ENCODE measurements at regions of chr12 and their contacts with region 1.

Region 1: DNA sequence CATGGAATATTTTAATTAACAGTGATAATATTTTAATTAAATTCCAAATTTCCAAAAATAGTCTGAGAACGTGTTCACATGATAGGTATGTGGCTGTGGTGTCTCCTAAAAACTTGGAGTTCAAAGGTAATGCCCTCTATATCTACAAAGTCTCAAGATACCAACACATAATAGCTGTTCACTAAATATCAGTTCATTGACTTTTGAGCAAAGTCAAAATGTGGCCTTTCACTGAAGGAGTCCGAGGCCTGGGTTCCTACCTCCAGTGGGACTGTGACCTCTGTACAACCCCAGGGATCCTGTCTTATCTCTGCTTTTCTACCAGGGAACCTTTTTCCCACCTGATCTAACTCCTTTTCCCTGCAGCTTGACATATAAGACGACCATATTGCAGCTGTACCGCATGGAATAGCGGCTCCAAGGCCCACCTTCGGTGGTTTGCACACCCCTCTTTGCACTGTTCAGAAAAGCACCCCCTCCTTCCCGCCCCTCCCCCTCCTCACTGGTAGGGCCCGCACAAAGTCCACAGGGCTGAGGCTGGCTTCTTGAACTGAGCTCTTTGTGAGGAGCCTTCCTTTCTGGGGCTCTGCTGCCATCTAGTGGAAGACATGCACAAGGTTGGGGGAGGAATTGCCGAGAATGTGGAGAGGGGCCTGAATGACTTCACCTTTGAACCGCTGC is 3.1 kb downstream of the CCND2 start:
- DNase-seq: peak; percentile 85
- ATAC-seq: peak; percentile 83
- H3K4me3 ChIP-seq: no peak overlapping the region
- H3K27ac ChIP-seq: no peak overlapping the region
- H3K4me1 ChIP-seq: peaks cover 47% of the 10 kb centered on the region
- H3K27me3 ChIP-seq: peaks cover 21 to 68% of the 10 kb centered on the region in 2 experiments; a peak in 4 of 5 replicates
- CTCF ChIP-seq: peak; percentile 96
- EP300 ChIP-seq: no peak
- POLR2A ChIP-seq: no peak
- RAD21 ChIP-seq: peak; percentile 88

Region 2: GRCh38 chr12:3299929-3300832 is 976.5 kb before region 1 on chr12:
- CTCF ChIA-PET with region 1: interaction called, 3 read pairs
- POLR2A ChIA-PET with region 1: no interaction called
- in situ Hi-C with region 1: loop called (anchors 10 kb)
- intact Hi-C with region 1: no loop called
- DNase-seq: peak; percentile 72
- ATAC-seq: peak; percentile 58
- H3K4me3 ChIP-seq: peak overlapping the region in 2 of 3 experiments; percentile 6 to 51; a peak in 4 of 6 replicates
- H3K27ac ChIP-seq: no peak overlapping the region
- H3K4me1 ChIP-seq: peaks cover 29% of the 10 kb centered on the region
- H3K27me3 ChIP-seq: peaks cover 2 to 54% of the 10 kb centered on the region in 2 experiments; a peak in 4 of 5 replicates
- CTCF ChIP-seq: peak; percentile 97
- EP300 ChIP-seq: no peak
- POLR2A ChIP-seq: no peak
- RAD21 ChIP-seq: peak; percentile 80

Region 3: DNA sequence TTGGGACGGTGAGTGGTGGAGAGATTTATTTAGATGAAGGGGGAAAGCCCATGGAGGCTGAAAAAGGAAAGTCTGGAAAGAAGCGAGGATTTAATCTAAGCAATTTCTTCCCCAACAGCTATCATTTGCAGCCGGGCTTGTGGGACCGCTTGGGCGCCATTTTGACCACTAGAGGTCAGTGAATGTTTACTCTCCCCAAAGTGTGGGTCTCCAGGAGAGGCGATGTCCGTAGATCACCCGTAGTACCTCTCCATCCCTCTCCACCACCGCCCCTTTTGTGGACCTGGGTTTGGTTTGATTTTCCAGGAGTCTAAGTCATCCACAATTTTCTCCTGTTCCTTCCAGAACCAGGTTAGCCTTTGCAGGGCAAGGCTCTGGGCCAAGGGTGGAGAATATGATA is 312.2 kb before region 1 on chr12:
- CTCF ChIA-PET with region 1: interaction called, 4 read pairs
- POLR2A ChIA-PET with region 1: interaction called, 3 read pairs
- in situ Hi-C with region 1: loop called (anchors 5 kb)
- intact Hi-C with region 1: no loop called
- DNase-seq: peak; percentile 18
- ATAC-seq: peak; percentile 63
- H3K4me3 ChIP-seq: no peak overlapping the region
- H3K27ac ChIP-seq: no peak overlapping the region
- H3K4me1 ChIP-seq: peaks cover 42% of the 10 kb centered on the region
- H3K27me3 ChIP-seq: no peaks in the 10 kb centered on the region
- CTCF ChIP-seq: peak; percentile 74
- EP300 ChIP-seq: no peak
- POLR2A ChIP-seq: no peak
- RAD21 ChIP-seq: peak; percentile 65

Region 4: GRCh38 chr12:3998968-3999826 is 277.5 kb before region 1 on chr12:
- CTCF ChIA-PET with region 1: interaction called, 10 read pairs
- POLR2A ChIA-PET with region 1: no interaction called
- in situ Hi-C with region 1: loop called (anchors 5 kb)
- intact Hi-C with region 1: loop called (anchors 5 kb)
- DNase-seq: peak; percentile 88
- ATAC-seq: peak; percentile 86
- H3K4me3 ChIP-seq: no peak overlapping the region; a peak in 1 of 6 replicates
- H3K27ac ChIP-seq: peak overlapping the region; percentile 89
- H3K4me1 ChIP-seq: peaks cover 52% of the 10 kb centered on the region
- H3K27me3 ChIP-seq: no peaks in the 10 kb centered on the region
- CTCF ChIP-seq: no peak
- EP300 ChIP-seq: peak; percentile 53 to 67; a peak in 2 of 4 replicates
- POLR2A ChIP-seq: 0 out of 4 replicates have a peak, but pooled peaks of 1 of the 2 experiments have one; percentile 27
- RAD21 ChIP-seq: no peak

Region 5: GRCh38 chr12:4107436-4107878 is 169.2 kb before region 1 on chr12:
- CTCF ChIA-PET with region 1: interaction called, 5 read pairs
- POLR2A ChIA-PET with region 1: no interaction called
- in situ Hi-C with region 1: loop called (anchors 5 kb)
- intact Hi-C with region 1: loop called (anchors 1 kb)
- DNase-seq: peak; percentile 55
- ATAC-seq: peak; percentile 86
- H3K4me3 ChIP-seq: no peak overlapping the region
- H3K27ac ChIP-seq: no peak overlapping the region
- H3K4me1 ChIP-seq: no peaks in the 10 kb centered on the region
- H3K27me3 ChIP-seq: no peaks in the 10 kb centered on the region
- CTCF ChIP-seq: peak; percentile 68
- EP300 ChIP-seq: no peak
- POLR2A ChIP-seq: no peak
- RAD21 ChIP-seq: no peak

Region 6: DNA sequence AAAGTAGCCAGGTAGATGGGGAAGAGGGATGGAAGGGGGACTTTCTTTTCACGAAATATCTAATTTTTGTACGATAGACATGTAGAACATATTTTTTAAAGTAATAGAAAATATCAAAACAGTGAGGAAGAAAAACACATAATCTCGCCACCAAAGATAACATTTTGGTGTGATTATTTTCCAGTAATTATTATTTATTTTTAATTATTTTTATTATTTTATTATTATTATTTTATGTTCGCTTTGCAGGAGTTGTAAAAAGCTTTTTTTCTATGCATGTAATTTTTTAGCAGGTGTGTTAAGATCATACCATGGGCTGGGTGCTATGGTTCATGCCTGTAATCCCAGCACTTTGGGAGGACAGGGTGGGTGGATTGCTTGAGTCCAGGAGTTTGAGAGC is 88.7 kb before region 1 on chr12:
- CTCF ChIA-PET with region 1: no interaction called
- POLR2A ChIA-PET with region 1: no interaction called
- in situ Hi-C with region 1: no loop called
- intact Hi-C with region 1: no loop called
- DNase-seq: no peak
- ATAC-seq: no peak
- H3K4me3 ChIP-seq: no peak overlapping the region
- H3K27ac ChIP-seq: no peak overlapping the region
- H3K4me1 ChIP-seq: no peaks in the 10 kb centered on the region
- H3K27me3 ChIP-seq: 0 out of 5 replicates have a peak, but pooled peaks cover 0 to 3% of the 10 kb centered on the region in 2 experiments
- CTCF ChIP-seq: no peak
- EP300 ChIP-seq: no peak
- POLR2A ChIP-seq: no peak
- RAD21 ChIP-seq: no peak

Region 7: DNA sequence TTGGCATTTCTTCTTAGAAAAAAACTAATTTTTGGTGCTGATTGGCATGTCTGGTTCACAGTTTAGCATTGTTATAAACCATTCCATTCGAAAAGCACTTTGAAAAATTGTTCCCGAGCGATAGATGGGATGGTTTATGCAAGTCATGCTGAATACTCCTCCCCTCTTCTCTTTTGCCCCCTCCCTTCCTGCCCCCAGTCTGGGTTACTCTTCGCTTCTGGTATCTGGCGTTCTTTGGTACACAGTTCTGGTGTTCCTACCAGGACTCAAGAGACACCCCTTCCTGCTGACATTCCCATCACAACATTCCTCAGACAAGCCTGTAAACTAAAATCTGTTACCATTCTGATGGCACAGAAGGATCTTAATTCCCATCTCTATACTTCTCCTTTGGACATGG is 24.2 kb after region 1 on chr12:
- CTCF ChIA-PET with region 1: no interaction called
- POLR2A ChIA-PET with region 1: no interaction called
- in situ Hi-C with region 1: no loop called
- intact Hi-C with region 1: no loop called
- DNase-seq: no peak
- ATAC-seq: no peak
- H3K4me3 ChIP-seq: no peak overlapping the region
- H3K27ac ChIP-seq: no peak overlapping the region
- H3K4me1 ChIP-seq: peaks cover 34% of the 10 kb centered on the region
- H3K27me3 ChIP-seq: peaks cover 0 to 18% of the 10 kb centered on the region in 2 experiments; a peak in 2 of 5 replicates
- CTCF ChIP-seq: no peak
- EP300 ChIP-seq: no peak
- POLR2A ChIP-seq: no peak
- RAD21 ChIP-seq: no peak